Endothelial cell of umbilical vein (primary cell): ENCODE measurements at regions of chr16 and their contacts with region 1.

Region 1: DNA sequence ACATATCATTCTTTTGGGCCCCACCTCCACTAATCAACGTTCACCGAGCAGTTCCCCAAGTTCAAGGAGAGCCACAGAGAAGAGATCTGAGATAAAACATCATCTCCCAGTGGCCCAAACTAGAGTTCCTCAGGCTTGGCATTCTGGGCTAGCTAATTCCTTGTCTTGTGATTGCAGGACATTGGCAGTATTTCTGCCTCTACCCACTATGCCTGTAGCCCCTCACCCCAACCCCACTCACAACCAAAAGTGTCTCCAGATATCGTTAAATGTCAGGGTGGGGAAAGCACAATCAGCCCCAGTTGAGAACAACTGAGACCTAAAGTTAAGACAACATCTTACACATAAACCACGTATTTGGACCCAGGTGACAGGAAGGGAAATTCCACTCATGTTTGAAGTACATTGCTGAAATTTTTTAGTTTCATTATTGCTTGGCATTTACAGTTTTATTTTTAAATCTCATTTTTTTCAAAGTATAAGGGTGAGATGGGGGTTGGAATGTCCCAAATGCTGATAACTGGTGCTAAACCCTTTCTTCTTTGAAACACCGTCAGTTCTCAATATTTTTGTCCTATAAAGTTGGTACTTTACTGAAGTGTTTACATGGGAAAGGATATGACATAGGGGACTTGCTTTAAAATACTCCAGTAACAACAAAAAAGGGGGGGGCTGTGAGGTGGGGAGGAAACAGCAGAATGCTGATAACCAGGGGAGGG is 13.6 kb downstream of the ZC3H7A start:
- DNase-seq: peak; percentile 88
- H3K4me3 ChIP-seq: peak overlapping the region in 2 of 3 experiments; percentile 16 to 67
- H3K27ac ChIP-seq: peak overlapping the region; percentile 94
- H3K4me1 ChIP-seq: peaks cover 29% of the 10 kb centered on the region
- H3K27me3 ChIP-seq: no peaks in the 10 kb centered on the region
- CTCF ChIP-seq: no peak
- POLR2A ChIP-seq: no peak

Region 2: GRCh38 chr16:11689031-11689761 is 94.3 kb before region 1 on chr16:
- CTCF ChIA-PET with region 1: no interaction called
- POLR2A ChIA-PET with region 1: no interaction called
- dilution Hi-C with region 1: no loop called
- intact Hi-C with region 1: no loop called
- DNase-seq: no peak
- H3K4me3 ChIP-seq: no peak overlapping the region
- H3K27ac ChIP-seq: no peak overlapping the region
- H3K4me1 ChIP-seq: no peaks in the 10 kb centered on the region
- H3K27me3 ChIP-seq: no peaks in the 10 kb centered on the region
- CTCF ChIP-seq: no peak
- POLR2A ChIP-seq: no peak

Region 3: GRCh38 chr16:11768849-11769248 is 14.6 kb before region 1 on chr16:
- CTCF ChIA-PET with region 1: no interaction called
- POLR2A ChIA-PET with region 1: interaction called, 4 read pairs
- dilution Hi-C with region 1: no loop called
- intact Hi-C with region 1: loop called (anchors 1 kb)
- DNase-seq: no peak
- H3K4me3 ChIP-seq: no peak overlapping the region
- H3K27ac ChIP-seq: no peak overlapping the region
- H3K4me1 ChIP-seq: no peaks in the 10 kb centered on the region
- H3K27me3 ChIP-seq: no peaks in the 10 kb centered on the region
- CTCF ChIP-seq: no peak
- POLR2A ChIP-seq: no peak

Region 4: GRCh38 chr16:11797166-11797956 is 13.9 kb after region 1 on chr16 and contains the start of gene ZC3H7A:
- CTCF ChIA-PET with region 1: interaction called, 29 read pairs
- POLR2A ChIA-PET with region 1: interaction called, 4 read pairs
- dilution Hi-C with region 1: no loop called
- intact Hi-C with region 1: loop called (anchors 1 kb)
- DNase-seq: peak; percentile 98
- H3K4me3 ChIP-seq: peak within 1 kb of the TSS; percentile 82 to 93 (median 93)
- H3K27ac ChIP-seq: peak within 1 kb of the TSS; percentile 87
- H3K4me1 ChIP-seq: peaks cover 32% of the 10 kb centered on the region
- H3K27me3 ChIP-seq: no peaks in the 10 kb centered on the region
- CTCF ChIP-seq: peak; percentile 49 to 88
- POLR2A ChIP-seq: peak; percentile 98
- total RNA-seq, gene ZC3H7A: 73.9 and 78.0 TPM in 2 replicates